ENCODE measurements at regions of chr5 and their contacts with region 1.

Region 1: GRCh38 chr5:12284604-12285003 is 380.4 kb upstream of the CTNND2 start:
- DNase-seq: no peak
- H3K4me3 ChIP-seq: no peak overlapping the region
- H3K27ac ChIP-seq: no peak overlapping the region
- H3K4me1 ChIP-seq: no peaks in the 10 kb centered on the region
- H3K27me3 ChIP-seq: no peaks in the 10 kb centered on the region
- CTCF ChIP-seq: no peak
- POLR2A ChIP-seq: no peak

Region 2: GRCh38 chr5:12193536-12193935 is 91.1 kb before region 1 on chr5:
- intact Hi-C with region 1: no loop called
- DNase-seq: no peak
- H3K4me3 ChIP-seq: no peak overlapping the region
- H3K27ac ChIP-seq: no peak overlapping the region
- H3K4me1 ChIP-seq: no peaks in the 10 kb centered on the region
- H3K27me3 ChIP-seq: no peaks in the 10 kb centered on the region
- CTCF ChIP-seq: no peak
- POLR2A ChIP-seq: no peak

Region 3: GRCh38 chr5:12385095-12385494 is 100.5 kb after region 1 on chr5:
- intact Hi-C with region 1: no loop called
- DNase-seq: no peak
- H3K4me3 ChIP-seq: no peak overlapping the region
- H3K27ac ChIP-seq: no peak overlapping the region
- H3K4me1 ChIP-seq: no peaks in the 10 kb centered on the region
- H3K27me3 ChIP-seq: no peaks in the 10 kb centered on the region
- CTCF ChIP-seq: no peak
- POLR2A ChIP-seq: no peak

Region 4: DNA sequence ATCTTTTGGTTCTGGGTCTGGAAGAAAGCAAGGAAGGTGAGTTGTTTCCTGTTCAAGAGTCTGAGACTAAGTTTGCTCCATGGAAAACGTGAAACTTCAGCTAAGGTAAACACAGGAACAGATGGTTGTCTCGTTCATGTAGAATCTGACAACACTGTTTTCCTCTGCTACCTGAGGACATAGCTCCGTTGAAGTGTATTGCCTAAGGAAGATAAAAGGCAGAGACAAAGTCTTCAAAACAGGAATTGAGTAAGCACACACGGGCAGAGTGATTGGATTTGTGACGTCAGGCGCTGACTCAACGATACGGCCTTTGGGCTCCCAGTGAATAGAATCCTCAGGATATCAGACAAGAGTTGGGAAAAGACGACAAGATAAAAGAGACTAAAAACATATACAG is 406.7 kb after region 1 on chr5:
- intact Hi-C with region 1: no loop called
- DNase-seq: no peak
- H3K4me3 ChIP-seq: no peak overlapping the region
- H3K27ac ChIP-seq: no peak overlapping the region
- H3K4me1 ChIP-seq: no peaks in the 10 kb centered on the region
- H3K27me3 ChIP-seq: no peaks in the 10 kb centered on the region
- CTCF ChIP-seq: no peak
- POLR2A ChIP-seq: no peak

Region 5: GRCh38 chr5:13480829-13481228 is 1196.2 kb after region 1 on chr5:
- intact Hi-C with region 1: loop called (anchors 10 kb)
- DNase-seq: no peak
- H3K4me3 ChIP-seq: no peak overlapping the region
- H3K27ac ChIP-seq: no peak overlapping the region
- H3K4me1 ChIP-seq: no peaks in the 10 kb centered on the region
- H3K27me3 ChIP-seq: peaks cover 0 to 16% (median 0%) of the 10 kb centered on the region in 7 donors
- CTCF ChIP-seq: no peak
- POLR2A ChIP-seq: no peak